Activated CD4-positive, alpha-beta memory T cell treated with anti-CD3 and anti-CD28 coated beads, Interleukin-2, amount 10 ng/mL, durations not matched to agents 7 days and 5 days (primary cell): ENCODE measurements at regions of chr15 and their contacts with region 1.

Region 1: DNA sequence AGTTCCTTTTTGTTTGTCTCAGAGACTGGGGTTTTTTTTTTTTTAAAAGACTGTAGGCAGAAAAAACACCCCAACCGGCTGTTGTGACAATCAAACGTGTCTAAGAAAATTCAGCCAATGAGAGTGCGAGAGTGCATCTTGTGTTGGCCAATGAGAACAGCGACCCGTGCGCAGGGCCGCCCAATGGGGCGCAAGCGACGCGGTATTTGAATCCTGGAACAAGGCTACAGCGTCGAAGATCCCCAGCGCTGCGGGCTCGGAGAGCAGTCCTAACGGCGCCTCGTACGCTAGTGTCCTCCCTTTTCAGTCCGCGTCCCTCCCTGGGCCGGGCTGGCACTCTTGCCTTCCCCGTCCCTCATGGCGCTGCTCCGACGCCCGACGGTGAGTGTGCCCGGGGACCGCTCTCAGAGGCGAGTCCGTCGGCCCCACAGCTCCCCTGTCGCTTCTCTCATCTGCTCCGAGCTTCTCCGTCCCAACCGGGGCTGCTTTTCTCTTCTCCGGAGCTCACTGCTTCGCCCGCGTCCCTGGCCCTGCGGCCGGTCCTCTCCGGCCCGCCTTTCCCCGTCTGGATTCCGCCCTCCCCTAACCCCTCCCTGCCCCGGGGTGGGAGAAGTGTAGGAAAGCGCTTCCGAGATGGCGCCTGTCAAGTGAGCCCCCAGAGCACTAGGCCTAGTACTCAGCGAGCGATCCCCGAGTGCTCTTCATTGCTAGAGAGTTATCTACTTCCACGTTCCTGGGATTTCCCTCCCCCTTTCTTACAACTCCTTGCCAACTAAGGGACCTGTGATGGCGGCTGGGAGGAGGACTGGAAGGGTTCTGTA is at the start of gene CCNB2:
- DNase-seq: peak; percentile 92
- H3K4me3 Mint-ChIP-seq: peak within 1 kb of the TSS; percentile 89
- H3K27ac Mint-ChIP-seq: peak within 1 kb of the TSS; percentile 99
- H3K4me1 Mint-ChIP-seq: peaks cover 40% of the 10 kb centered on the region
- H3K27me3 Mint-ChIP-seq: no peaks in the 10 kb centered on the region
- total RNA-seq, gene CCNB2: 92.5 to 96.3 TPM

Region 2: DNA sequence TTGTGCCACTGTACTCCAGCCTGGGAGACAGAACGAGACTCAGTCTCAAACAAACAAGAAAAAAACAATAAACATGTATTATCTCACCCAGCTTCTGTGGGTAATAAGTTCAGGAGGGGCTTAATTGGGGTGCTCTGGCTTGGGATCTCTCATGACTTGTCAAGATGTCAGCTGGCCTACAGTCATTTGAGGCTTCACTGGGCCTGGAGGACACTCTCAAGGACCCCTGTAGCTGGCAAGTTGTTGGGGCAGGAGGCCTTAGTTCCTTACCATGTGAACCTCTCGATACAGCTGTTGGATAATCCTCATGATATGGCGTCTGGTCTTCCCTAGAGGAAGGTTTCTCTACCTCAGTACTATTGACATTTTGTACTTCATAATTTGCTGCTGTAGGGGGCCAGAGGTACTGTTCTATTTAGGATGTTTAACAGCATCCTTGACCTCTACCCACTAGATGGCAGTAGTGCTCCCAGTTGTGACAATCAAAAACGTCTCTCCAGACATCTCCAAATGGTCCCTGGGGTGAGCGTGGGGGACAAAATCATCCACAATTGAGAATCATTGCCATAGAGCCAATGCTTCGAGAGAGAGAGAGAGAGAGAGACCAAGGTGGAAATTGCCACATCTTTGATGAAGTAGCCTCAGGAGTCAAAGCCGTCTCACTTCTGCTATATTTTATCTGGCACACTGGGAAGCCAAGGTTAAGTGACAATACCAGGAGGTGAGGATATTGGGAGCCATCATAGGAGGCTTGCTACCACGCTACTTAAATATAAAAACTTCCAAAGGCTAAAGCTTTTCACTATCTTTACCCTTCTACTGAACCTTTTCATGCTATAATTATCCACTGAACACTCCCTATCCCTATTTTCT is 147.8 kb before region 1 on chr15:
- CTCF ChIA-PET with region 1: interaction called, 11 read pairs
- POLR2A ChIA-PET with region 1: no interaction called
- DNase-seq: peak; percentile 65
- H3K4me3 Mint-ChIP-seq: no peak overlapping the region
- H3K27ac Mint-ChIP-seq: no peak overlapping the region
- H3K4me1 Mint-ChIP-seq: peaks cover 15% of the 10 kb centered on the region
- H3K27me3 Mint-ChIP-seq: peaks cover 1% of the 10 kb centered on the region

Region 3: GRCh38 chr15:58987489-58988005 is 117.6 kb before region 1 on chr15 and contains the start of gene RNF111:
- CTCF ChIA-PET with region 1: interaction called, 3 read pairs
- POLR2A ChIA-PET with region 1: interaction called, 21 read pairs
- DNase-seq: peak; percentile 92
- H3K4me3 Mint-ChIP-seq: peak within 1 kb of the TSS; percentile 96
- H3K27ac Mint-ChIP-seq: peak within 1 kb of the TSS; percentile 80
- H3K4me1 Mint-ChIP-seq: peaks cover 47% of the 10 kb centered on the region
- H3K27me3 Mint-ChIP-seq: peaks cover 9% of the 10 kb centered on the region
- total RNA-seq, gene RNF111: 32.3 to 37.2 TPM

Region 4: DNA sequence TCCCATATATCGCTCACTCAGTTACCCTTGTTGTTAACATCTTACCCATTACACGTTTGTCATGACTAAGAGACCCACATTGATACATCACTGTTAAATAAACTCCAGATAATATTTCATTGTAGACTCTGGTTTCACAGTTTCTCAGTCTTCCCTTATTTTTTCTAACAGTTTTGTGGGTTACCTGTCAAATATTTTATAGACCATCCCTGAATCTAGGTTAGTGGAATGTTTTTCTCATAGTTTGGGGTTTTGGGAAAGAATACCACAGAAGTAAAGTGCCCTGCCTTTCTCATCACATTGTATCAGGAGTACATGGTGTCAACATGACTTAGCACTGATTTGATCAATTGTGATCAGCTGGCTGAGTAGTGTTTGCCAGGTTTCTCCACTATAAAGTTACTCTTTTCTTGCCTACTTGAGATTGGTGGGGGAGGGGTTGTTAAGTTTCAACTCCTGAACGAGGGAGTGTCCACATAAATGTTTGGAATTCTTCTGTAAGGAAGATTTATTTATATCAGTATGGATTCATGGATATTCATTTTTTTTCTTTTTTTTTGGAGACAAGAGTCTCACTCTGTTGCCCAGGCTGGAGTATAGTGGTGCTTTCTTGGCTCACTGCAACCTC is 91.8 kb before region 1 on chr15:
- CTCF ChIA-PET with region 1: no interaction called
- POLR2A ChIA-PET with region 1: no interaction called
- DNase-seq: no peak
- H3K4me3 Mint-ChIP-seq: no peak overlapping the region
- H3K27ac Mint-ChIP-seq: no peak overlapping the region
- H3K4me1 Mint-ChIP-seq: peaks cover 9% of the 10 kb centered on the region
- H3K27me3 Mint-ChIP-seq: no peaks in the 10 kb centered on the region

Region 5: GRCh38 chr15:59051873-59052861 is 53.0 kb before region 1 on chr15:
- CTCF ChIA-PET with region 1: no interaction called
- POLR2A ChIA-PET with region 1: interaction called, 10 read pairs
- DNase-seq: no peak
- H3K4me3 Mint-ChIP-seq: peak overlapping the region; percentile 52
- H3K27ac Mint-ChIP-seq: peak overlapping the region; percentile 89
- H3K4me1 Mint-ChIP-seq: peaks cover 32% of the 10 kb centered on the region
- H3K27me3 Mint-ChIP-seq: no peaks in the 10 kb centered on the region

Region 6: GRCh38 chr15:59473226-59473625 is 368.1 kb after region 1 on chr15:
- CTCF ChIA-PET with region 1: no interaction called
- POLR2A ChIA-PET with region 1: no interaction called
- DNase-seq: no peak
- H3K4me3 Mint-ChIP-seq: no peak overlapping the region
- H3K27ac Mint-ChIP-seq: no peak overlapping the region
- H3K4me1 Mint-ChIP-seq: no peaks in the 10 kb centered on the region
- H3K27me3 Mint-ChIP-seq: peaks cover 44% of the 10 kb centered on the region